Heart right ventricle (tissue), 16 donors: ENCODE measurements at regions of chr16 and their contacts with region 1.

Region 1: DNA sequence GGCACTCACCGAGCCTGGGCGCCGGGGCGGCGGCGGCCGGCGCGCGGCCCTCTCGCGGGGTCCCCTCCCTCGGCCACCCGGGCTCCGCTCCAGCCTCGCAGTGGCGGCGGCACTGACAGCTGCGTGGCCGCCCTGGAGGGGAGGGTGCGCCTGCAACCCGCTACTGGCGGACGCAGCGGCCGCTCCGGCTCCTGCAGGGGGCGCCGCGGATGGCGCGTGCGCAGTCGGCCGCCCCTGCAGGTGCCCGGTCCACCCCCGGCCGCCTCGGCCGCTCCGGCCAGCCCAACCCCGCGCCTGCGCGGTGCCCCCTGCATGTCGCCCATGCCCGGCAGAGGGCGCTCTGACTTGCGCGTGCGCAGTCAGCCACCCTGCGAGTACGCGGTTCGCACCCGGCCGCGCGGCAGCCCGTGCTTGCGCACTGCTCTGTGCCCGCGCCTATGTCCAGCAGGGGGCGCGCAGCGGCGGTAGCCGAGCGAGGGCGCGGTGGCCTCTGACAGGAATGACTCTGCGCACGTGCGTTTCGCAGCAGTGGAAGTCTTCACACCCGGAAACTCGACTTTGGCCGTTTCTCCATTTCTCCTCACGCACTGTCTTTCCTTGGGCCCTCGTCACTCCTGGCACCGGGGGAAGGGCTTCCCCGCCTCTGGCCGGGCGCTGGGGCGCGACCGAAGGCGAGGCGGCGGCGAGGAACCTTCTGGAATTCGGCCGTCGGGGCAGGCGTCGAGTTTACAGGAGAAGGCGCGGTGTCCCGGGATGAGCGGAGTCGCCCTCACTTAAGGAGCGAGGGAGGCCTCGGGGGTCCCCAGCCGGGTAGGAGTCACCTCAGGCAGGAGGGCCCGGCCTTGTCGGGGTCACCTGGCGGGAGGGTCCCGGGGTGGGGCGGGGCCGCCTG is at the start of gene ABCA3:
- DNase-seq: peak; percentile 90 to 96
- ATAC-seq: peak; percentile 95 to 99 (median 96)
- H3K4me3 ChIP-seq: peak within 1 kb of the TSS; percentile 69 to 91 (median 80)
- H3K27ac ChIP-seq: peak within 1 kb of the TSS in 9 of 10 donors; percentile 4 to 64 (median 52)
- H3K4me1 ChIP-seq: peaks cover 0 to 21% (median 15%) of the 10 kb centered on the region in 9 donors
- H3K27me3 ChIP-seq: peaks cover 0 to 34% (median 0%) of the 10 kb centered on the region in 7 donors
- CTCF ChIP-seq: peak; percentile 99 to 100 (median 100)
- total RNA-seq, gene ABCA3: 7.7 to 12.5 (median 9.4) TPM

Region 2: DNA sequence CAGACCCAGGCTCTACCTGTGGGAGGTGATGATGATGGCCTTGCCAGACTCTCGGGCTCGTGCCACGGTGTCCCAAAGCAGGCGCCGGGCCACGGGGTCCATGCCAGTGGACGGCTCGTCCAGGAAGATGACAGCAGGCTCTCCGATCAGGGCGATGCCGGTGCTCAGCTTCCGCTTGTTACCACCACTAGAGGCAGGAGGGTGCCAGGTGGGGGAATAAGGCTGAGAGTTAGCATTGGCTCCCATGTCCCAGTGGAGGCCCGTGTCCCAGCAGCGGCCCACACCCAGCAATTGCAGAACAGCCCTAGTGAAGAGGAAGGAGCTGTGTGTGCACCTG is 62.6 kb before region 1 on chr16:
- intact Hi-C with region 1: loop called in 1 of 10 experiments (anchors 10 kb)
- DNase-seq: no peak
- ATAC-seq: no peak
- H3K4me3 ChIP-seq: no peak overlapping the region
- H3K27ac ChIP-seq: no peak overlapping the region
- H3K4me1 ChIP-seq: no peaks in the 10 kb centered on the region
- H3K27me3 ChIP-seq: no peaks in the 10 kb centered on the region
- CTCF ChIP-seq: no peak

Region 3: DNA sequence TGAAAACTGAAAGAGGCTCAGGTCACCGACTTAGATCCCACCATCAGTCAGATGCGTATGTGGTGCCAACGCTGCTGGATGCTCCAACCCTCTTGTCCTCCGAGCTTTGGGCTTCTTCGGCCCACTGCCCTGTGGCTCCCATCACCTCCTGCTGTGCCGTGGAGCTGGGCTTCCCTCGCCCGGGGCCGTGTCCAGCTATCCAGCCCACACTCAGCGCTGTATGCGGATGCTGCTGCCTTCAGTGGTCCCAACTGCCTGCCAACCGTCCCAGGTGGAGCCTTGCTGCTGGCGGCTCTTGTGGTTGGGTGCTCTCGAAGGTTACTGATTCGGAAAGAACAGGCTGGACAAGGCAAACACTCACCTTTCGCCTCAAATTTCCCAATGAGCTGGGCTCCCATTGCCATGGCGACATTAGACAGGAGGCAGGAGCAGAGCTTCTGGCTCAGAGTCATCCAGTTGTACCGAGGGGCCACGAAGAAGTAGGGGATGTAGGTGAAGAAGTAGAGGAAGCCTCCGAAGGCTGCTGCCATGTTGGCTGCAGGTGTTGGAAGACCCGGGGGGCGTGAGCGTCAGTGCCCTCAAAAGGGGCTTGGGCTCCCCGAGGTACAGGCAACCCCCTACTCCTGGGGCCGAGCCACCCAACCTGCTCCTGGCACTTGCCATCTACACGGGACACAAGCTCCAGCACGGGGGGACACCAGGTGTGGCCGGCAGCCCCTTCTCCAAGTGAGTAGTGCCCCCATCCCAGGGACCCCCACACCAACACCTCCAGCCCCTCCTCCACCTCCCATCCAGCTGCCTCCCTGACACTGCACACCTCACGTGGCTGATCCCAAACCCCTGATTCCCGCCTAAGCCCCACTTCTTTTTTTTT is 32.5 kb before region 1 on chr16:
- intact Hi-C with region 1: no loop called
- DNase-seq: no peak
- ATAC-seq: no peak
- H3K4me3 ChIP-seq: no peak overlapping the region
- H3K27ac ChIP-seq: no peak overlapping the region
- H3K4me1 ChIP-seq: no peaks in the 10 kb centered on the region
- H3K27me3 ChIP-seq: no peaks in the 10 kb centered on the region
- CTCF ChIP-seq: no peak

Region 4: DNA sequence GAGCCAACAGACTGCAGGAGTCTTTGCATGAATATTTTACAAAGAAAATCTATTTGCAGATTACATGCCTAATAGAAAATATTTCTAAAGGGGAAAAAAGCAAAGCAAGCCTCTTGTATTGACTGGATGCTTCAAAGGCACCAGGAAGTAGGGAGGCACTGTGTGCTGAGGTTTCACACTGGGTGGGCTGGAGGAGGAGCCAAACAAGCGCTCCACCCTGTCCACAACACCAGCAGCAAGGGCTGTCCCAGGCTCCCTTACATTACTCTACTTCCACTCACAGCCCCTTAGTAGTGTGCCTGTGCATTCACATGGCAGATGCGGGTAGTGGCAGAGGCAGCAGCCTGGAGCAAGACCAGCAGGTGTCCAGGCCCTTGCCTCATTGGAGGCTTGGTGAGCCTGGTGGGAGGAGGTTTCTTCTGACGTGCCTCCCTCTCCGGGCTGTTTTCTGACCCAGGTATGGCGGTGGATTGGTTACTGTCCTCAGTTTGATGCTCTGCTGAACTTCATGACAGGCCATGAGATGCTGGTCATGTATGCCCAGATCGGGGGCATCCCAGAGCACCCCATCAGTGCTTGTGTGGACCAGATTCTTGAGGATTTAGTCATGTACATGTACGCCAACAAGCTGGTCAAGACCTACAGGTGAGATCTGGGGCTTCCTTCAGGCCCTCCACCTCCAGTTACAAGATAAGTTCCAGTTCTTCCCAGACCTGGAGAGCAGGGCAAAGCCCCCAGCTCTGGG is 81.5 kb after region 1 on chr16:
- intact Hi-C with region 1: loop called in 8 of 10 experiments (anchors 2 to 10 kb)
- DNase-seq: no peak
- ATAC-seq: peak in 1 of 8 donors; percentile 12
- H3K4me3 ChIP-seq: no peak overlapping the region
- H3K27ac ChIP-seq: no peak overlapping the region
- H3K4me1 ChIP-seq: peaks cover 0 to 5% (median 0%) of the 10 kb centered on the region in 9 donors
- H3K27me3 ChIP-seq: peaks cover 0 to 4% (median 0%) of the 10 kb centered on the region in 7 donors
- CTCF ChIP-seq: no peak

Region 5: GRCh38 chr16:2486645-2487516 is 146.1 kb after region 1 on chr16:
- intact Hi-C with region 1: loop called in 1 of 10 experiments (anchors 5 kb)
- DNase-seq: peak in 1 of 2 donors; percentile 59
- ATAC-seq: peak; percentile 45 to 80 (median 64)
- H3K4me3 ChIP-seq: peak overlapping the region in 1 of 10 donors; percentile 2
- H3K27ac ChIP-seq: peak overlapping the region in 9 of 10 donors; percentile 32 to 70 (median 59)
- H3K4me1 ChIP-seq: peaks cover 6 to 45% (median 29%) of the 10 kb centered on the region in 9 donors
- H3K27me3 ChIP-seq: no peaks in the 10 kb centered on the region
- CTCF ChIP-seq: peak in 7 of 9 donors; percentile 18 to 51 (median 39)